B cell (primary cell): ENCODE measurements at regions of chr3 and their contacts with region 1.

Region 1: DNA sequence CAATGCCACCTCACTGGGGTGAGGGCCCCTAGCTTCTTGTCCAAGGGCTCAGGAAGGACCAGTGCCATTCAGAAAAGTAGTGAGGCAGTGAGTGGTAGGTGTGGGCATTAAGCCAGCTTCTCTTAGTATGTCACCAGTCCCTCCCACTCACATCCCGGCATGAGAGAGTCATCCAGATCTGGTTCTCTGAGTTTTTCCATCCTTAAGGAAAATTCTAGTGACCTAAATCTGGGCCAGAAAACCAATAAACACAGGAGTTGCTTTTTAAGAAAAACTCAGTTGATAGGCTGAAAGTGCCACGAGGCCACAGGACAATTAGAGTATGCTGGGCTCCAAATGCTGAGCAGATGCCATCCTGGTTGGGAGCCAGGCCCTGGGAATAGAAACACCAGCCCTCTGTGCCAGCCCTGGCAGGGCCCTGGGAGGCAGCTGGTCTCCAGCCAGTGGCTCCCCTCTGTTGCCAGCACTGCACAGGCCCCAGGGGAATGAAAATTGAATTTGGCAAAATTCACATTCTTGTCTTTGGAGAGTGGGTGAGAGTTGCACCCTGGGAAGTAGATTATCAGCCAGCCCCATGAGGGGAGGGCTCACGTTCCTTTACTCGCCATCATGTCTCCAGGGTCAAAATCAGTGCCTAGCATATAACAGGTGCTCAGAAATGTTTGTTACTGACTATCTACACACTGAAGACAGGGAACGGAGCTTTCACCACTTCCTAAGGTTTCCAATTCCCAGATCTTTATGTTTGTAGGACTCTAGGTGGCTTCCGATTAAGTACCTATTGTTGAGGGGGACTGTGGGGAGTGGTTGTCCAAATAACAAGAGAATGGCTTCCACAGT is 52.8 kb downstream of the FAM43A start:
- DNase-seq: no peak
- ATAC-seq: no peak
- H3K4me3 ChIP-seq: no peak overlapping the region
- H3K4me3 Mint-ChIP-seq: no peak overlapping the region
- H3K27ac ChIP-seq: no peak overlapping the region
- H3K27ac Mint-ChIP-seq: peak overlapping the region; percentile 27
- H3K4me1 ChIP-seq: peaks cover 25 to 35% of the 10 kb centered on the region in 2 donors
- H3K4me1 Mint-ChIP-seq: peaks cover 28% of the 10 kb centered on the region
- H3K27me3 ChIP-seq: no peaks in the 10 kb centered on the region
- H3K27me3 Mint-ChIP-seq: no peaks in the 10 kb centered on the region
- CTCF ChIP-seq: no peak

Region 2: GRCh38 chr3:194315088-194315964 is 423.1 kb before region 1 on chr3:
- CTCF ChIA-PET with region 1: no interaction called
- POLR2A ChIA-PET with region 1: no interaction called
- intact Hi-C with region 1: no loop called
- DNase-seq: peak; percentile 92
- ATAC-seq: peak; percentile 85
- H3K4me3 ChIP-seq: peak overlapping the region; percentile 17 to 72 (median 50)
- H3K4me3 Mint-ChIP-seq: peak overlapping the region; percentile 80
- H3K27ac ChIP-seq: no peak overlapping the region
- H3K27ac Mint-ChIP-seq: peak overlapping the region; percentile 37
- H3K4me1 ChIP-seq: peaks cover 24 to 25% of the 10 kb centered on the region in 2 donors
- H3K4me1 Mint-ChIP-seq: peaks cover 28% of the 10 kb centered on the region
- H3K27me3 ChIP-seq: peaks cover 0 to 74% (median 30%) of the 10 kb centered on the region in 4 experiments
- H3K27me3 Mint-ChIP-seq: peaks cover 57% of the 10 kb centered on the region
- CTCF ChIP-seq: peak; percentile 98

Region 3: DNA sequence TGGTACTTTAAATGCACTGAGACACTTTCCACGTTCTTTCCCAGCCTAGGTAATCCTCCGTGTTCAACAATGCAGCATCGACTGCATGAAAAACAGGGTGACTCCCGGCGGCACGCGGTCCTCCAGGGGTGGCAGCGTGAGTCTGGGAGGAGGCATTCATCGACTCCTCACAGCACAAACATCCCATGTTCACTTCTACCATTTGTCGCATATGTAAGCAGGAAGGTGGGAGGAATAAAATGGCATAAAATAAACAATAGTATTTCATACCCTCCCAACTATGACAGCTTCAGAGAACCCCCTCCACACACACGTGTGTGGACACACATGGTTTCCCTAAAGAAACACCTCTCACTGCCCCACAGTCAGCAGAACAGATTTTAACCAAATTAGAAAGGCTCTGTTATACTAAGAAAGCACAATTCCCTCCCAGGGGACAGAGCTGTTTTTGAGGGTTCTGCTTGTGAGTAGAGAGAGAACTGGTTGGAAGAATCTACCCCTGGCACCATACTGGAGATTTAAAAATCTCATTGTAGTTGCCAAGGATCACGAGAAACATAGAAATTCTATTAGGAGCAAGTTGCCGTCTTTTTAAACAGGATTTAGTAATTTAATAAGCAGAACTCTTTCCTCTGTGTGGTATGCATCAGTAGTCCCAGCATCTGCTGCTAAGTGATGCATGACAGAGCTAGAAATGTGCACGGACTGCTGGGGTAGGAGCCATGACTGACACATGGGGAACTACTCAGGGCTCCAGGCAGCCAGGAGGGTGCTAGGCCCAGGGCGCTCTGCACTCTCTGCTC is 46.8 kb before region 1 on chr3:
- CTCF ChIA-PET with region 1: interaction called, 64 read pairs
- POLR2A ChIA-PET with region 1: interaction called, 51 read pairs
- intact Hi-C with region 1: loop called (anchors 1 kb)
- DNase-seq: peak; percentile 89
- ATAC-seq: peak; percentile 58
- H3K4me3 ChIP-seq: peak overlapping the region in 3 of 5 experiments; percentile 13 to 28 (median 13)
- H3K4me3 Mint-ChIP-seq: peak overlapping the region; percentile 82
- H3K27ac ChIP-seq: peak overlapping the region; percentile 78
- H3K27ac Mint-ChIP-seq: peak overlapping the region; percentile 97
- H3K4me1 ChIP-seq: peaks cover 71 to 88% of the 10 kb centered on the region in 2 donors
- H3K4me1 Mint-ChIP-seq: peaks cover 78% of the 10 kb centered on the region
- H3K27me3 ChIP-seq: no peaks in the 10 kb centered on the region
- H3K27me3 Mint-ChIP-seq: no peaks in the 10 kb centered on the region
- CTCF ChIP-seq: no peak

Region 4: DNA sequence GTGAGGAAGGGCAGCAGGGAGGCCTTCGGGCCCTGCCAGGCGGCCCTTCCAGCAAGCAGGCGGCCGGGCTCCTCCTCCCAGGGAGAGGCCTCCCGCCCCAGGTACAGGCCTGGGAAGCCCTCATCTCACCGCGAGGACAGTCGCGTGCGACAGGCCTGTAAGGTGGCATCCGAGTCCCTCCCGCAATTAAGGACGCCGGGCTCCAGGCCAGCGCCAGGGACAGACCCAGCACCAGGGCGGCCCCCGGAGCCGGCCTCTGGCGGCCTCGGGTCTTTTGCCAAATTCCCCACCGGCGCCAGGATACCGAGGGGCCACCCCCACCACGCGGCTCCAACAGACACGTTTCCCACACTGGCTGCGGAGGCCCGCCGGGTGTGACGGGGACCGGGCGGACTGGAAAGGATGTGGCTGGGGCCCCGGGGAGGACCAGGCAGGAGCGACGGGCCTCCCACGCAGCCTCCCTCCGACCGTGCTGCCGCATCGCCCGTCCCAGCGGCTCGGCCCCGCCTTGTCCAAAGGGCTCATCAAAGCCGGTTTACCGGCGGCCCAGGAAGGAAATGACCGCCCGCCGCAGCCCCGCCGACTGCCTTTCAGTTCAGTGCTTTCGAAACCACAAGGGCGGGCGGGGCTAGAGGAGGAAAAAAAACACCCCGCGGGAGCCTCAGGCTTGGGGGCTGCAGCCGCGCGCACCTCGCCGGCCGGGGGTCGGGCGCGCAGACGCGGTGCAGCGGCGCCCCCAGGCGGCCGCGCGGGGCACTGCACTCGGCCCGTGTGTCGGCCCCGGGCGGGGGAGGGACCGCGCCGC is 521.2 kb after region 1 on chr3:
- CTCF ChIA-PET with region 1: interaction called, 3 read pairs
- POLR2A ChIA-PET with region 1: no interaction called
- intact Hi-C with region 1: loop called (anchors 1 kb)
- DNase-seq: peak; percentile 95
- ATAC-seq: peak; percentile 90
- H3K4me3 ChIP-seq: peak overlapping the region in 4 of 5 experiments; percentile 63 to 89 (median 72)
- H3K4me3 Mint-ChIP-seq: peak overlapping the region; percentile 74
- H3K27ac ChIP-seq: peak overlapping the region; percentile 78 to 87
- H3K27ac Mint-ChIP-seq: peak overlapping the region; percentile 92
- H3K4me1 ChIP-seq: peaks cover 16 to 23% of the 10 kb centered on the region in 2 donors
- H3K4me1 Mint-ChIP-seq: peaks cover 19% of the 10 kb centered on the region
- H3K27me3 ChIP-seq: no peaks in the 10 kb centered on the region
- H3K27me3 Mint-ChIP-seq: no peaks in the 10 kb centered on the region
- CTCF ChIP-seq: peak; percentile 73